ENCODE measurements at regions of chr4 and their contacts with region 1.

Region 1: GRCh38 chr4:42248984-42249383 is 96.5 kb upstream of the BEND4 start:
- DNase-seq: no peak
- H3K4me3 ChIP-seq: no peak overlapping the region
- H3K27ac ChIP-seq: no peak overlapping the region
- H3K4me1 ChIP-seq: no peaks in the 10 kb centered on the region
- H3K27me3 ChIP-seq: no peaks in the 10 kb centered on the region
- CTCF ChIP-seq: no peak
- EP300 ChIP-seq: no peak
- POLR2A ChIP-seq: no peak

Region 2: DNA sequence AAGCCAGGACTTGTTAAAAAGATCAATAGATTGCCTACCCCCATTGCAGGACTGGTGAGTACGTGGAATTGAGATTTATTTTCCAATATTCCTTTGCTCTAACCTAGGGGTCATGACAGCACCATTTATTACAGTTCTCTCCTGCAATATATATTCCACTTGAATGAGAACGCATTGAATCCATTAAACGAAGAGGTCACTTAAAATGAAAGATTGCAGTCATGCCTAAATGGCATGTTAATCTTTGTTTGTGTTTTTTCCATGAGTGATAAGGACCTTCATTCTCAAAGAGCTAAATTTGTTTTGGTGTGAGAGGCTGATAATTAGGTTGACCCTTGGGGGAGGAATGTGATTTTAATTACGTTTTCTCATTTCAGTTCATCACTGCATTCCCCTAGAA is 724.6 kb before region 1 on chr4:
- intact Hi-C with region 1: loop called in 1 of 4 experiments (anchors 5 kb)
- DNase-seq: no peak
- H3K4me3 ChIP-seq: no peak overlapping the region
- H3K27ac ChIP-seq: no peak overlapping the region
- H3K4me1 ChIP-seq: no peaks in the 10 kb centered on the region
- H3K27me3 ChIP-seq: no peaks in the 10 kb centered on the region
- CTCF ChIP-seq: no peak
- EP300 ChIP-seq: no peak
- POLR2A ChIP-seq: no peak

Region 3: GRCh38 chr4:42225286-42225685 is 23.7 kb before region 1 on chr4:
- intact Hi-C with region 1: no loop called
- DNase-seq: no peak
- H3K4me3 ChIP-seq: no peak overlapping the region
- H3K27ac ChIP-seq: no peak overlapping the region
- H3K4me1 ChIP-seq: no peaks in the 10 kb centered on the region
- H3K27me3 ChIP-seq: no peaks in the 10 kb centered on the region
- CTCF ChIP-seq: no peak
- EP300 ChIP-seq: no peak
- POLR2A ChIP-seq: no peak

Region 4: GRCh38 chr4:42709392-42710091 is 460.6 kb after region 1 on chr4:
- intact Hi-C with region 1: loop called in 1 of 4 experiments (anchors 10 kb)
- DNase-seq: no peak
- H3K4me3 ChIP-seq: no peak overlapping the region
- H3K27ac ChIP-seq: no peak overlapping the region
- H3K4me1 ChIP-seq: no peaks in the 10 kb centered on the region
- H3K27me3 ChIP-seq: no peaks in the 10 kb centered on the region
- CTCF ChIP-seq: no peak
- EP300 ChIP-seq: no peak
- POLR2A ChIP-seq: no peak

Measured in ovary (tissue), 10 donors.